Activated CD8-positive, alpha-beta T cell treated with anti-CD3 and anti-CD28 coated beads, Interleukin-2, amount 10 ng/mL, durations not matched to agents 7 days and 5 days (primary cell): ENCODE measurements at regions of chr19 and their contacts with region 1.

Region 1: GRCh38 chr19:16111160-16111908 is at the start of gene RAB8A:
- DNase-seq: peak; percentile 98
- ATAC-seq: peak; percentile 96
- H3K4me3 Mint-ChIP-seq: peak within 1 kb of the TSS; percentile 98
- H3K27ac Mint-ChIP-seq: peak within 1 kb of the TSS; percentile 99
- H3K4me1 Mint-ChIP-seq: peaks cover 39% of the 10 kb centered on the region
- H3K27me3 Mint-ChIP-seq: no peaks in the 10 kb centered on the region
- total RNA-seq, gene RAB8A: 156 to 167 TPM

Region 2: GRCh38 chr19:16062789-16063188 is 48.5 kb before region 1 on chr19:
- CTCF ChIA-PET with region 1: interaction called, 12 read pairs
- POLR2A ChIA-PET with region 1: interaction called, 3 read pairs
- DNase-seq: peak; percentile 75
- ATAC-seq: peak; percentile 45
- H3K4me3 Mint-ChIP-seq: no peak overlapping the region
- H3K27ac Mint-ChIP-seq: no peak overlapping the region
- H3K4me1 Mint-ChIP-seq: peaks cover 34% of the 10 kb centered on the region
- H3K27me3 Mint-ChIP-seq: peaks cover 12% of the 10 kb centered on the region

Region 3: DNA sequence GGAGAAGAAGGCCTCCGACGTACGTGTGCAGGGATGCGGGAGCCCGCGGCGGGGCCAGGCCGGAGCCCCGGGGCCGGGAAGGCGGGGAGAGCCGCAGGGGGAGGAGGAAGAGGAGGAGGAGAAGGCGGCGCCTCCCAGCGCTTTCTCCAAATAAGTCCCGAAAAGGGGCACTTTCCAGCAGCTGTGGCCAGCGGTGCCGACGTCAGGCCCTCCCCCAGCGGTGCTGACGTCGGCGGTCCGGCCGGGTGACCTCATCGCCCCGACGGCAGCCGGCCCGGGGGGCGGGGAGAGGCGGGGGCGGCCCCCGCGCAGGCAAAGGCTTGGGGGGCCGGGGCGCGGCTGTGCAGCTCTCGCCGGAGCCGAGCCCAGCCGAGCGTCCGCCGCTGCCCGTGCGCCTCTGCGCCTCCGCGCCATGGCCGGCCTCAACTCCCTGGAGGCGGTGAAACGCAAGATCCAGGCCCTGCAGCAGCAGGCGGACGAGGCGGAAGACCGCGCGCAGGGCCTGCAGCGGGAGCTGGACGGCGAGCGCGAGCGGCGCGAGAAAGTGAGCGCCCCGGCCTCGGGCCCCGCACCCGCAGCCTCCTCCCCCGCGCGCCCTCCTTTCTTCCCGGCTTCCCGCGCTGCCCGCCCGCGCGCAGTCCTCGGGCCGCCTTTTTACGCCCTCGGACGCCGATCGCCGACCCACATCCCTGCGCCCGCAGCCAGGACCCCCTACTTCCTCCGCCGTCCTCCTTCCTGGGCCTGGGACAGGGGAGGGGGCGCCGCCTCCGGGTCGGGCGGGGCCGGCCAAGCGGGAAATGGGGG is 35.0 kb before region 1 on chr19 and contains the start of gene TPM4:
- CTCF ChIA-PET with region 1: interaction called, 16 read pairs
- POLR2A ChIA-PET with region 1: interaction called, 19 read pairs
- DNase-seq: peak; percentile 95
- ATAC-seq: peak; percentile 64
- H3K4me3 Mint-ChIP-seq: peak within 1 kb of the TSS; percentile 82
- H3K27ac Mint-ChIP-seq: peak within 1 kb of the TSS; percentile 96
- H3K4me1 Mint-ChIP-seq: peaks cover 71% of the 10 kb centered on the region
- H3K27me3 Mint-ChIP-seq: no peaks in the 10 kb centered on the region
- total RNA-seq, gene TPM4: 424 to 436 TPM

Region 4: GRCh38 chr19:16088351-16089009 is 22.9 kb before region 1 on chr19:
- CTCF ChIA-PET with region 1: interaction called, 19 read pairs
- POLR2A ChIA-PET with region 1: interaction called, 9 read pairs
- DNase-seq: no peak
- ATAC-seq: no peak
- H3K4me3 Mint-ChIP-seq: no peak overlapping the region
- H3K27ac Mint-ChIP-seq: peak overlapping the region; percentile 37
- H3K4me1 Mint-ChIP-seq: peaks cover 66% of the 10 kb centered on the region
- H3K27me3 Mint-ChIP-seq: no peaks in the 10 kb centered on the region

Region 5: GRCh38 chr19:16143399-16144245 is 32.3 kb after region 1 on chr19 and contains the start of gene HSH2D:
- CTCF ChIA-PET with region 1: interaction called, 14 read pairs
- POLR2A ChIA-PET with region 1: interaction called, 16 read pairs
- DNase-seq: peak; percentile 94
- ATAC-seq: peak; percentile 95
- H3K4me3 Mint-ChIP-seq: peak within 1 kb of the TSS; percentile 96
- H3K27ac Mint-ChIP-seq: peak within 1 kb of the TSS; percentile 99
- H3K4me1 Mint-ChIP-seq: peaks cover 65% of the 10 kb centered on the region
- H3K27me3 Mint-ChIP-seq: no peaks in the 10 kb centered on the region
- total RNA-seq, gene HSH2D: 83.6 to 84.3 TPM

Region 6: DNA sequence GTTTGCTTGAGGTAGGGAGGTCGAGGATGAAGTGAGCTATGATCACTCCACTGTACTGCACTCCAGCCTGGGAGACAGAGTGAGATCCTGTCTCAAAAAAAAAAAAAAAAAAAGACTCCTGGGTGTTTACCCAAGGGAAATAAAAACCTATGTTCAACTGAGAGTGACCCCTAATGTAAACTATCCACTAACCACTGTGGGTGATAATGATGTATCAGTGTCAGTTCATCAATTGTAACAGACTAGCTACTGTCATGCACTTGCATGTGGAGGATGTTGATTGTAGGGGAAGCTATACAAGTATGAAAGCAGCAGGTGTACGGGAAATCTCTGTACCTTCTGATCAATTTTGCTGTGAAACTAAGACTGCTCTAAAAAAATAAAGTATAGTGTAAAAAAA is 64.6 kb after region 1 on chr19:
- CTCF ChIA-PET with region 1: no interaction called
- POLR2A ChIA-PET with region 1: no interaction called
- DNase-seq: no peak
- ATAC-seq: no peak
- H3K4me3 Mint-ChIP-seq: no peak overlapping the region
- H3K27ac Mint-ChIP-seq: no peak overlapping the region
- H3K4me1 Mint-ChIP-seq: peaks cover 9% of the 10 kb centered on the region
- H3K27me3 Mint-ChIP-seq: peaks cover 8% of the 10 kb centered on the region